Naive thymus-derived CD4-positive, alpha-beta T cell (primary cell): ENCODE measurements at regions of chr9 and their contacts with region 1.

Region 1: DNA sequence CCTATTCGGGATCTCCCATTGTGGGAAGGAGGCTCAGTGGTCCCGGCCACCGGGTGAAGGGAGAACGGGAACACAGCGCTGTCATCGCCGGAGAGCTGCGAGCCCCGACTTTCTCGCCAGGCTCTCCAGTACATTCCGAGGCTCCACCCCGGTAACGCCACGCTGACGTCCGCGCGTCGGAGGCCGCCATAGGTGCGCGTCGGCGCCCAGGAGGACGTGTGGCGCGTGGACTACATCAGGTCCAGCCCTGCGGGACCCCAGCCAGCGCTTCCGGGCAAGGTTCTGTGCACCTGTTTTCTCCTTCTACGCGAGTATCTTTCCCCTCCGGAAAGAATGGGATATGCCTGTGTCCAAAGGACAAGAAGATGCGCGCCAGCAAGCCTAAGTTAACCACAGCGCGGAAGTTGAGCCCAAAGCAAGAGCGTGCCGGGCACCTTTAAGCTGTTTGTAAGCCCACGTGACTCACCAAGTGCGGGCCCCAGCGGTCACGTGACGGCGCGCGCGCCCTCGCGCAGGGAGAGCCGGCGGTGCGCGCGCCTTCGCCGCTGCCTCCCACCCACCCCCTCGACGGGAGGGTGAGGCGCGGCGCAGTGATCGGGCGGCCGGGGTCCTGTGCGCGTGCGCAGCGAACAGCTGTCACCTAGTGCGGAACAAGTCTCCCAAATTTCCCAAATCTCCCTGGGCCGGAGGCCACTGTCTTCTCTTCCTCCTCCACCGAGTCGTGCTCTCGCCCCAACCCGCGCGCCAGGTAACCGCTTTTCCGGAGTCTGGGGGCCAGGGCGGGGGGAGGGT is at the start of gene KDM4C:
- DNase-seq: peak; percentile 92 to 97 (median 94)
- ATAC-seq: peak; percentile 87
- H3K4me3 ChIP-seq: peak within 1 kb of the TSS; percentile 71
- H3K4me3 Mint-ChIP-seq: peak within 1 kb of the TSS; percentile 89 to 99 (median 96)
- H3K27ac ChIP-seq: peak within 1 kb of the TSS; percentile 98
- H3K27ac Mint-ChIP-seq: peak within 1 kb of the TSS; percentile 98 to 100 (median 100)
- H3K4me1 ChIP-seq: peaks cover 9 to 12% of the 10 kb centered on the region in 2 donors
- H3K4me1 Mint-ChIP-seq: peaks cover 12 to 41% (median 26%) of the 10 kb centered on the region in 7 donors
- H3K27me3 ChIP-seq: no peaks in the 10 kb centered on the region
- H3K27me3 Mint-ChIP-seq: no peaks in the 10 kb centered on the region
- total RNA-seq, gene KDM4C: 68.6 to 100 (median 93.3) TPM

Region 2: GRCh38 chr9:4792572-4793458 is 1964.8 kb before region 1 on chr9 and contains the start of gene RCL1:
- CTCF ChIA-PET with region 1: no interaction called
- POLR2A ChIA-PET with region 1: no interaction called
- intact Hi-C with region 1: loop called in 1 of 2 experiments (anchors 2 kb)
- DNase-seq: peak; percentile 93 to 98 (median 97)
- ATAC-seq: peak; percentile 96
- H3K4me3 ChIP-seq: peak within 1 kb of the TSS; percentile 99
- H3K4me3 Mint-ChIP-seq: peak within 1 kb of the TSS; percentile 83 to 97 (median 94)
- H3K27ac ChIP-seq: peak within 1 kb of the TSS; percentile 80
- H3K27ac Mint-ChIP-seq: peak within 1 kb of the TSS; percentile 71 to 97 (median 94)
- H3K4me1 ChIP-seq: peaks cover 4 to 18% of the 10 kb centered on the region in 2 donors
- H3K4me1 Mint-ChIP-seq: peaks cover 21 to 56% (median 45%) of the 10 kb centered on the region in 7 donors
- H3K27me3 ChIP-seq: no peaks in the 10 kb centered on the region
- H3K27me3 Mint-ChIP-seq: peaks cover 0 to 11% (median 0%) of the 10 kb centered on the region in 5 donors
- total RNA-seq, gene RCL1: 21.5 to 39.4 (median 23.4) TPM

Region 3: DNA sequence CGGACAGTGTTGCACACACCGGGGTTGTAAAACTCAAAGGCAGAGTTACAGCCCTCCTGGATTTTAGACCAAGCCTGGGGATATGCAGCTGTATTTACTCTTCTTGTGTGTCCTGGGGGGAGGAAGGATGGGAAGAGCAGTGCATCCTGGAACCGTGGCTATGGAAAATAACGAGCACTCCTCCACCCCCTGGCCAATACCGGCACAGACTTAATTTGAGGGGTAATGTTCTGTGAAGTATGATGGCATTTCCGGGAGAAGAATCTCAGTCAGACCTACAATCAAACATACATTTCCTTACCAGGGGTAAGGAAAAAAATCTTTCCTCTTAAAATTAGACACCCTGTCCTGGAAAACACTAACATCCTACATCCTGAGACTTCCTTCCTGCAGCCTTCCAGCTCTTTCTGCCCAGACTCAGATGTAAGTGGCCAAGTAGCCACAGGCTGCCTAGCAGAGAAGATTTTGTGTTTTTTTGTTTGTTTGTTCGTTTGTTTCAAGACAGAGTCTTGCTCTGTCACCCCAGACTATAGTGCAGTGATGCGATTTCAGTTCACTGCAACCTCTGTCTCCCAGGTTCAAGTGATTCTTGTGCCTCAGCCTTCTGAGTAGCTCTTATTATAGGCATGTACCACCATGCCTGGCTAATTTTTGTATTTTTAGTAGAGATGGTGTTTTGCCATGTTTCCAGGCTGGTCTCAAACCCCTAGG is 913.7 kb before region 1 on chr9:
- CTCF ChIA-PET with region 1: no interaction called
- POLR2A ChIA-PET with region 1: interaction called, 9 read pairs
- intact Hi-C with region 1: loop called (anchors 2 to 5 kb)
- DNase-seq: peak in 2 of 9 donors; percentile 7 to 22
- ATAC-seq: peak; percentile 20
- H3K4me3 ChIP-seq: peak overlapping the region; percentile 5
- H3K4me3 Mint-ChIP-seq: peak overlapping the region; percentile 75 to 85 (median 80)
- H3K27ac ChIP-seq: peak overlapping the region; percentile 24
- H3K27ac Mint-ChIP-seq: peak overlapping the region; percentile 58 to 93 (median 91)
- H3K4me1 ChIP-seq: peaks cover 45 to 47% of the 10 kb centered on the region in 2 donors
- H3K4me1 Mint-ChIP-seq: peaks cover 50 to 83% (median 64%) of the 10 kb centered on the region in 7 donors
- H3K27me3 ChIP-seq: no peaks in the 10 kb centered on the region
- H3K27me3 Mint-ChIP-seq: no peaks in the 10 kb centered on the region

Region 4: GRCh38 chr9:6681147-6681956 is 76.3 kb before region 1 on chr9:
- CTCF ChIA-PET with region 1: interaction called, 5 read pairs
- POLR2A ChIA-PET with region 1: interaction called, 132 read pairs
- intact Hi-C with region 1: loop called (anchors 1 kb)
- DNase-seq: peak; percentile 71 to 95 (median 90)
- ATAC-seq: peak; percentile 90
- H3K4me3 ChIP-seq: peak overlapping the region; percentile 89
- H3K4me3 Mint-ChIP-seq: peak overlapping the region; percentile 88 to 98 (median 95)
- H3K27ac ChIP-seq: peak overlapping the region; percentile 91
- H3K27ac Mint-ChIP-seq: peak overlapping the region; percentile 97 to 100 (median 99)
- H3K4me1 ChIP-seq: peaks cover 0 to 6% of the 10 kb centered on the region in 2 donors
- H3K4me1 Mint-ChIP-seq: peaks cover 7 to 31% (median 20%) of the 10 kb centered on the region in 7 donors
- H3K27me3 ChIP-seq: no peaks in the 10 kb centered on the region
- H3K27me3 Mint-ChIP-seq: no peaks in the 10 kb centered on the region

Region 5: GRCh38 chr9:6739218-6739617 is 18.4 kb before region 1 on chr9:
- CTCF ChIA-PET with region 1: no interaction called
- POLR2A ChIA-PET with region 1: interaction called, 14 read pairs
- intact Hi-C with region 1: no loop called
- DNase-seq: no peak
- ATAC-seq: no peak
- H3K4me3 ChIP-seq: no peak overlapping the region
- H3K4me3 Mint-ChIP-seq: no peak overlapping the region
- H3K27ac ChIP-seq: no peak overlapping the region
- H3K27ac Mint-ChIP-seq: no peak overlapping the region
- H3K4me1 ChIP-seq: no peaks in the 10 kb centered on the region
- H3K4me1 Mint-ChIP-seq: no peaks in the 10 kb centered on the region
- H3K27me3 ChIP-seq: no peaks in the 10 kb centered on the region
- H3K27me3 Mint-ChIP-seq: peaks cover 0 to 3% (median 0%) of the 10 kb centered on the region in 5 donors

Region 6: GRCh38 chr9:6894135-6894534 is 136.5 kb after region 1 on chr9:
- CTCF ChIA-PET with region 1: no interaction called
- POLR2A ChIA-PET with region 1: no interaction called
- intact Hi-C with region 1: loop called in 1 of 2 experiments (anchors 5 kb)
- DNase-seq: no peak
- ATAC-seq: no peak
- H3K4me3 ChIP-seq: no peak overlapping the region
- H3K4me3 Mint-ChIP-seq: peak overlapping the region in 1 of 10 donors; percentile 69
- H3K27ac ChIP-seq: no peak overlapping the region
- H3K27ac Mint-ChIP-seq: peak overlapping the region in 2 of 9 donors; percentile 47 to 78
- H3K4me1 ChIP-seq: peaks cover 6 to 12% of the 10 kb centered on the region in 2 donors
- H3K4me1 Mint-ChIP-seq: peaks cover 40 to 71% (median 54%) of the 10 kb centered on the region in 7 donors
- H3K27me3 ChIP-seq: no peaks in the 10 kb centered on the region
- H3K27me3 Mint-ChIP-seq: no peaks in the 10 kb centered on the region

Region 7: DNA sequence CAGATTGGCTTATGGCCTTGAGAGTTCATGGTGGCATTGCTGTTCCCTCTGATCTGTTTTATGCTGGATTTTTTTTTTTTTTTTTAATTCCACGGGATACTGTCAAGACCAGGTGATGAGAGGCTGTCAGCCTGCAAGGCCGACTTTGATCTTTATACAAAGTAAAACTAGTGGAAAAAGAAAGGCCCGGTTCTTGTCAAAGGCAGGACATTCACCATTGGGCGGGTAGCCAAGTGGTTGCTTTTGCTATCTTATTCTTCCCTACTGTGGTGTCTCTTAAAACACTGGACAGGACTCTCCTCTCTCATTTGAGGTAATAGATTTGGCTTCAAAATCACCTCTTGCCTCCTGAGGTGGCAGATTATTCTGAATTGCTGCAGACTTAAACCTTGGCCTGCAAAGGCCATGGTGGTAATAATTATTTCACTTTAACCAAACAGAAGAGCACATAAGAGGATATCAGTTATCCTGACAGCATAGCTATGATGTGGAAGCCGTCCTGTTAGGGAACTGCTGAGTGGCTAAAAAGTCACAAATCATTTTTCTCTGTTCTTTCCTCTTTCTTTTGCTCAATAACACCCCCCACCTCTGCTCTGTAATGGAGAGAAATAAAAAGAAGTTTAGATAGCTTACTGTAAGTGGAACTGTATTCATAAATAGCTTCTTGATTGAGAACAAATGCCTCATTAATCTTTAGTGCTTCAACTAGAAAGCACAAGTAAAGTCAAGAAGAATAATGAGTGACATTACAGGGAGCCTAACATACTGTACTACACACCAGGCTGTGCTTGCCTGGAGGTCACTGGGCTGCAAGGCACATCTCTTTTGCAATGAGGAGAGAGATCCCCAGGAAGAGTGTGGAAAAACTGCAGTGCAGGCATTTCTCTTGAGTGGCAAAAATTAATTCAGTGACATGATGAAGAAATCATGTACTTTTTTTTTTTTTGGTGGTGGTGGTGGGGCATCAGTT is 275.7 kb after region 1 on chr9:
- CTCF ChIA-PET with region 1: no interaction called
- POLR2A ChIA-PET with region 1: no interaction called
- intact Hi-C with region 1: no loop called
- DNase-seq: no peak
- ATAC-seq: no peak
- H3K4me3 ChIP-seq: no peak overlapping the region
- H3K4me3 Mint-ChIP-seq: no peak overlapping the region
- H3K27ac ChIP-seq: no peak overlapping the region
- H3K27ac Mint-ChIP-seq: peak overlapping the region in 1 of 9 donors; percentile 47
- H3K4me1 ChIP-seq: no peaks in the 10 kb centered on the region
- H3K4me1 Mint-ChIP-seq: peaks cover 0 to 29% (median 2%) of the 10 kb centered on the region in 7 donors
- H3K27me3 ChIP-seq: no peaks in the 10 kb centered on the region
- H3K27me3 Mint-ChIP-seq: no peaks in the 10 kb centered on the region

Region 8: GRCh38 chr9:7976167-7976755 is 1218.6 kb after region 1 on chr9:
- CTCF ChIA-PET with region 1: no interaction called
- POLR2A ChIA-PET with region 1: no interaction called
- intact Hi-C with region 1: loop called (anchors 2 to 10 kb)
- DNase-seq: peak in 8 of 9 donors; percentile 46 to 89 (median 82)
- ATAC-seq: peak; percentile 97
- H3K4me3 ChIP-seq: no peak overlapping the region
- H3K4me3 Mint-ChIP-seq: peak overlapping the region; percentile 16 to 80 (median 71)
- H3K27ac ChIP-seq: peak overlapping the region; percentile 14
- H3K27ac Mint-ChIP-seq: peak overlapping the region; percentile 76 to 97 (median 87)
- H3K4me1 ChIP-seq: peaks cover 41 to 60% of the 10 kb centered on the region in 2 donors
- H3K4me1 Mint-ChIP-seq: peaks cover 44 to 82% (median 72%) of the 10 kb centered on the region in 7 donors
- H3K27me3 ChIP-seq: no peaks in the 10 kb centered on the region
- H3K27me3 Mint-ChIP-seq: no peaks in the 10 kb centered on the region